ENCODE measurements at regions of chr9 and their contacts with region 1.

Region 1: DNA sequence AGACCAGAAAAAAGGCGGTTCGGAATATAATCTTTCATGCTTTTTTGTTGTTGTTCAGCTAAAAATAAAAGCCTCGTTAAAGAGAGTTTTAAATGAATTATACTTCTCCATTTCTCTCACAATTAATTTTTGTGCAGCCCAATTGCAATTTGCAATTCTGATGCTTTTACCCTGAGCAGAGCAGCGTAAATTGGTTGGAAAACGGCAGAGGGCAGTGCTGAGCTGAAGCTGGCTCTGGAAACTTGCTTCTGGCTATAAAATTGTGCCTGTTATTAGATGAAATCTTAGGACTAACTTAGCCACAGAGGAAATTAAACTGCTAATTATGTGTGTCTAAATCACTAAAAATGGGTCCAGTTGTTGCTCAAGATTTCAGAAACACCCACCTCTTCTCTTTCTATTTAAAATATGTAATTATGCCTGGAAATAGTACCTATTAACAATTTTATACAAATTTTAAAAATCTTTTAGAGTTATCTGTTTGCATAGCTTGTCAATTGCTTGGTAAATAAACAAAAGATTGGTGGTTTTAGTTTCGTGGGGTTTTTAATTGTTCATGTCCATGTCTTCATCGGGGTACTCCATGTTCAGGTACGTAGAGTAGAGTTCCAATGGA is 441.8 kb upstream of the TLE4 start:
- DNase-seq: peak; percentile 66
- ATAC-seq: peak; percentile 63; the same call in 1 of the 2 replicates
- H3K4me3 ChIP-seq: no peak overlapping the region
- H3K27ac ChIP-seq: no peak overlapping the region
- H3K4me1 ChIP-seq: peaks cover 9% of the 10 kb centered on the region; the same call in 1 of the 2 replicates
- H3K27me3 ChIP-seq: no peaks in the 10 kb centered on the region
- CTCF ChIP-seq: peak; percentile 80

Region 2: DNA sequence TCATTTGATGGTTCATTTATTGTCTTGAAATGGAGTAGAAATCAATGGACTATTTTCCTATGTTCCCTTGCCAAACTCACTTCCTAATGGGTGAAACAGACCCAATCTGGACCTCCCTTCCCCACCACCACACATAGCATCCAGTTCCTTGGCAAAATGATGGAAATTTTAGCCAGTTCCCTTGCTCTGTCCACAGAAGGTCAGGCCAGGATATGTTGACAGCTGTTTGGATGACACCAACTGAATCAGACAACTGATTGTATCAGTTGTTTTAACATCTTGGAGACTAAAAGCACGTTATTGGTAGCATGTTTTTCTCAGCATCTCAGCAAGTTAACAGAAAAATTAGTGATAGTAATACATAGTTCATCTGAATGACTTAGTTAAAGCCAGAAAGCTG is 298.2 kb before region 1 on chr9:
- CTCF ChIA-PET with region 1: interaction called, 4 read pairs
- POLR2A ChIA-PET with region 1: no interaction called
- intact Hi-C with region 1: loop called (anchors 10 kb)
- DNase-seq: no peak
- ATAC-seq: no peak
- H3K4me3 ChIP-seq: no peak overlapping the region
- H3K27ac ChIP-seq: no peak overlapping the region
- H3K4me1 ChIP-seq: peaks cover 17% of the 10 kb centered on the region
- H3K27me3 ChIP-seq: no peaks in the 10 kb centered on the region
- CTCF ChIP-seq: no peak

Region 3: DNA sequence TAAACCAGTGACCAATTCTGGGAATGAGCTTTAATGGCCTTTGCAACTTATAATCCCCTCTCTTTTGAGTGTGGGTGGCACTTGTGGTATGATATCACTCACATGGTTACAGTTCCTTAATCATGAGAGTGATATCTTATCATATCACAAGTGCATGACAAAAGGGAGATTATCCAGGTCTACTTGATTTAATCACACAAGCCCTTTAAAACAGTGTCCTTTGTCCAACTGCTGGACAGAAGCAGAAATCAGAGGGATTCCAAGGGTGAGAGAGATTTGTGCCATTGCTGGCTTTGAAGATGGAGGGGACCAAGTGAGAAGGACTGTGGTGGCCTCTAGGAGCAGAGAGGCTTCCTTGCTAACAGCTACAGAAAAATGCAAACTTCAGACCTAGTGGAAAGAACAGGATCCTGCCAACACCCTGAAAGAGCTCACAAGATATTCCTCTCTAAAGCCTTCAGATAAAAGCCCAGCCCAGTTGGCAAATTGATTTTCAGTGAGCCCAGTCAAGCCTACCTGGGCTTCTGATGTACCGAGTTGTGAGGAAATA is 162.8 kb after region 1 on chr9:
- CTCF ChIA-PET with region 1: no interaction called
- POLR2A ChIA-PET with region 1: no interaction called
- intact Hi-C with region 1: loop called (anchors 1 kb)
- DNase-seq: peak; percentile 42
- ATAC-seq: peak; percentile 78
- H3K4me3 ChIP-seq: no peak overlapping the region
- H3K27ac ChIP-seq: no peak overlapping the region
- H3K4me1 ChIP-seq: no peaks in the 10 kb centered on the region
- H3K27me3 ChIP-seq: no peaks in the 10 kb centered on the region
- CTCF ChIP-seq: peak; percentile 57; the same call in 1 of the 2 replicates

Measured in PC-3 (cell line).